ENCODE measurements at regions of chr1 and their contacts with region 1.

Region 1: GRCh38 chr1:39799770-39800470 is 11.3 kb upstream of the BMP8B start:
- DNase-seq: peak; percentile 44 to 78 (median 60)
- ATAC-seq: peak; percentile 60
- H3K4me3 ChIP-seq: peak overlapping the region; percentile 41
- H3K4me3 Mint-ChIP-seq: peak overlapping the region; percentile 59
- H3K27ac ChIP-seq: no peak overlapping the region
- H3K27ac Mint-ChIP-seq: peak overlapping the region; percentile 89
- H3K4me1 ChIP-seq: peaks cover 17% of the 10 kb centered on the region
- H3K4me1 Mint-ChIP-seq: peaks cover 12% of the 10 kb centered on the region
- H3K27me3 ChIP-seq: no peaks in the 10 kb centered on the region
- H3K27me3 Mint-ChIP-seq: no peaks in the 10 kb centered on the region
- CTCF ChIP-seq: peak; percentile 77

Region 2: DNA sequence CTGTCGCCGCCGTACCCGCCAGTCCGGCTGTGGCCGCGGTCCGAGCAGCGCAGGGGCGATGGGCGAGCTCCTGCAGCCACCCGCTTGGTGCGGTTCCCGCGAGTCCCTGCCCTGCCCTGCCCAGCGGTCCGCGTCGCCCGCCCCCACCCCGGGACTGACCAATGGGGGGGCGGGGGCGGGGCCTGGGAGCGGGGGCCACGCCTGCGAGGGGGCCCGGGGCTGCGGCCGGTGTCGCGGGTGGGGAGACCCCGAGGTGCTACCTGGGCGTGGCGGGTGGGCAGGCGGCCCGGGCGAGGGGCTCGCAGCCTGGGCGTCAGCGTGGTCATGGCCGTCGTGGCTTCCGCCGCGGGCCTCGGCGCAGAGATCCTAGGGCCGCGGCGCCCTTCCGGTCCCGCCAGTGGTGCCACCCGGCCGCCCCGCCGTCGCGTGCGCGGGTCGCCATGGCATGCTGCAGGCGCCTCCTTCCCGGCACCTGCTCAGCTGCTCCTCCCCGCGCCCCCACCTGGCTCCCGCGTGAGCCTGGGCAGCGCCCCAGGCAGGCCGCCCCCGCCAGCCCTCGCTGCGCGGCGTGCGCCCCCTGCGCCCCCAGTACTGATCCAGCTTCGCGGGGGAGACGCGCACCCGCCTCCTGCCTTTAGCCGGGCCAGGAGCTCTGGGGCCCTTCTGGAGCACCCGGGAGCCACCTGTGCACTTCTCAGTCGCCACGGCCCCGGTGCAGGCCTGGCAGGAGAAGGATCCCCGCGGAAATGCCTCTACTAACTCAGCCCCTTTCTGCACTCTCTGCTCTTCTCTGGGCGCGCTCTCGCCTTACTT is 11.0 kb before region 1 on chr1 and contains the start of gene BMP8B:
- CTCF ChIA-PET with region 1: interaction called, 14 read pairs
- POLR2A ChIA-PET with region 1: no interaction called
- intact Hi-C with region 1: no loop called
- DNase-seq: peak in 11 of 14 experiments; percentile 7 to 78 (median 35)
- ATAC-seq: peak; percentile 67
- H3K4me3 ChIP-seq: peak within 1 kb of the TSS; percentile 47
- H3K4me3 Mint-ChIP-seq: peak within 1 kb of the TSS; percentile 76
- H3K27ac ChIP-seq: no peak within 1 kb of the TSS
- H3K27ac Mint-ChIP-seq: no peak within 1 kb of the TSS
- H3K4me1 ChIP-seq: peaks cover 15% of the 10 kb centered on the region
- H3K4me1 Mint-ChIP-seq: peaks cover 5% of the 10 kb centered on the region
- H3K27me3 ChIP-seq: peaks cover 6% of the 10 kb centered on the region in 2 experiments
- H3K27me3 Mint-ChIP-seq: peaks cover 45% of the 10 kb centered on the region
- CTCF ChIP-seq: no peak
- total RNA-seq, gene BMP8B: 0.06 TPM in 1 of 2 experiments, not detected in the other